ENCODE measurements at regions of chr5 and their contacts with region 1.

Region 1: DNA sequence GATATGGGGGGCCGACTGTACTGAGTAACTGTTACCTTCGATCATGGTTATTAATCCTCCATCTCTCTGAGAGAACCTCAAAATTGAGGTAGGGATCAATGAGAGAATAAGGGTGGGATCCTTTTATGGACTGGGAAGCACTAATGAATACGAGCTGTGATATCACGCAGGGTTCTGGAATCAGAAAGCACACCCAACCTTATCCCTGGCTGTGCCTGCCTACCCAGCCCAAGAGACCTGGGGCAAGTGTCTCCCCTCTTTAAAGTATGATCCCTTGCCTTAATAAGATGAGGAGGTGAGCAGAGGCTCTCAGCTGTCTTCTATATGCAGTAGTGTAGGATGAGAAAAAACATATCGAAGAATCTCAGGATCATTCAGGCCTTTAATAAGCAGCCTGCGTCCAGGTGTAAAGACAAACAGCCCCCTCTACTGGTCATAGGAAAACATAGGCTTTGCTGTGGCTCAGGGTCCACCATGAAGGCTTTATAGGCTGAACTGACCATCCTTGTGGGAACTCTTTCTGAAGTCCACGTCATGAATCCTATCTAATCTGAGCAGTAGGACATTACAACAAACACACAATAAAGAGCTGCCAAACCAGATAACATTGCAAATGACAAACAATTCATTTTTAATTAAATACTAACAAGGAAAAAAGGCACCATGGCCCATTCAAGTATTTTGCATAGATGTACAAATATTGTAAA is 16.8 kb downstream of the NIPAL4 start:
- DNase-seq: peak; percentile 75
- H3K4me3 Mint-ChIP-seq: no peak overlapping the region
- H3K27ac Mint-ChIP-seq: peak overlapping the region; percentile 29
- H3K4me1 Mint-ChIP-seq: peaks cover 52% of the 10 kb centered on the region
- H3K27me3 Mint-ChIP-seq: no peaks in the 10 kb centered on the region

Region 2: GRCh38 chr5:157328277-157328912 is 148.5 kb before region 1 on chr5:
- intact Hi-C with region 1: loop called (anchors 1 kb)
- DNase-seq: peak; percentile 87
- H3K4me3 Mint-ChIP-seq: peak overlapping the region; percentile 36
- H3K27ac Mint-ChIP-seq: peak overlapping the region; percentile 89
- H3K4me1 Mint-ChIP-seq: peaks cover 36% of the 10 kb centered on the region
- H3K27me3 Mint-ChIP-seq: no peaks in the 10 kb centered on the region

Region 3: GRCh38 chr5:157342822-157343402 is 133.9 kb before region 1 on chr5:
- intact Hi-C with region 1: loop called (anchors 5 kb)
- DNase-seq: peak; percentile 77
- H3K4me3 Mint-ChIP-seq: no peak overlapping the region
- H3K27ac Mint-ChIP-seq: peak overlapping the region; percentile 35
- H3K4me1 Mint-ChIP-seq: peaks cover 16% of the 10 kb centered on the region
- H3K27me3 Mint-ChIP-seq: no peaks in the 10 kb centered on the region

Region 4: GRCh38 chr5:157431544-157432200 is 45.2 kb before region 1 on chr5:
- intact Hi-C with region 1: loop called (anchors 2 kb)
- DNase-seq: peak; percentile 84
- H3K4me3 Mint-ChIP-seq: no peak overlapping the region
- H3K27ac Mint-ChIP-seq: no peak overlapping the region
- H3K4me1 Mint-ChIP-seq: peaks cover 11% of the 10 kb centered on the region
- H3K27me3 Mint-ChIP-seq: peaks cover 30% of the 10 kb centered on the region

Measured in activated CD4-positive, alpha-beta T cell treated with anti-CD3 and anti-CD28 coated beads, Interleukin-2, amount 10 ng/mL, durations not matched to agents 24 days and 14 days (primary cell).